Vagina (tissue), 2 donors: ENCODE measurements at regions of chr5 and their contacts with region 1.

Region 1: GRCh38 chr5:159915904-159916840 is at the start of gene ADRA1B:
- DNase-seq: no peak
- H3K4me3 ChIP-seq: peak within 1 kb of the TSS; percentile 29 to 33
- H3K27ac ChIP-seq: peak within 1 kb of the TSS; percentile 23
- H3K4me1 ChIP-seq: peaks cover 6% of the 10 kb centered on the region
- H3K27me3 ChIP-seq: no peaks in the 10 kb centered on the region
- CTCF ChIP-seq: peak in 2 of 3 experiments; percentile 36
- POLR2A ChIP-seq: no peak
- total RNA-seq, gene ADRA1B: 0.74 TPM

Region 2: GRCh38 chr5:159444441-159445082 is 471.6 kb before region 1 on chr5:
- intact Hi-C with region 1: loop called (anchors 5 kb)
- DNase-seq: no peak
- H3K4me3 ChIP-seq: no peak overlapping the region
- H3K27ac ChIP-seq: no peak overlapping the region
- H3K4me1 ChIP-seq: no peaks in the 10 kb centered on the region
- H3K27me3 ChIP-seq: no peaks in the 10 kb centered on the region
- CTCF ChIP-seq: peak in 1 of 3 experiments; percentile 34
- POLR2A ChIP-seq: no peak